OCI-LY7 (cell line): ENCODE measurements at regions of chr4 and their contacts with region 1.

Region 1: GRCh38 chr4:40564004-40564403 is 65.7 kb downstream of the RBM47 start:
- DNase-seq: no peak
- H3K4me3 ChIP-seq: no peak overlapping the region
- H3K27ac ChIP-seq: no peak overlapping the region
- H3K4me1 ChIP-seq: peaks cover 56% of the 10 kb centered on the region
- CTCF ChIP-seq: no peak

Region 2: DNA sequence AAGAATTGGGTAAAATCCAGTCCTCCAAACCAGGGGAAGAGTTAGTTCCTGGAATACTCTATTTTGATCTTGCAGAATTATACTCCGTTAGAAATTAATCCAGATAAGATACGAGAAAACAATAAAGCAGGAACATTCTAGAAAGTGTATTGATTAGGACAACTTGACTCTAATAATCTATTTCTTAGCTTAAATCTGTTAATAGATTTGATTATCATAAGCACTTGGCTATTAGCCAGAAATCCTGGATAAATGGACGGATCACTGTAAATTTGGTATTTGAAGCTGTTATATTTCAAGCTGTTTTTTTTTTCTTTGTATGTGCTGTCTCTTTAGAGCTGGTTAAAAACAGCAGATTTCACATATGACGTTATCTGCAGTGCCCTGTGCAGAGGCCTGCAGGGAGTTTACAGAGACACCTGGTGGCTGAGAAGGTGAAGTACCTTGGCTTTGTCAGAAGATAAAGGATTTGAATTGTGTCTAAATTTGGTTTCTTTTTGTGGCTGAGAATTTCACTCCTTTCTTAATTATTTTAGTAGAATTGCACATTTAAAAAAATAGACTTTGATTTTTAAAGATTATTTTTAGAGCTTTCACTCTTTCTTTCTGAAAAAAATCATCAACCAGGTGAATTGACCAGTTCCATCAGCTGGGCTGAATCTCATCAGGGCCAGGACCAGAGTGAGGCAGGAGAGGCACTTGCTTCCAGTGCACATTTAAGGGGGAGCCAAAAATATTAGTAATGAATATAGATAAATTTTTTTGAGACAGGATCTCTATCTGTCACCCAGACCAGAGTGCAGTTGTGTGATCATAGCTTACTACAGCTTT is 238.6 kb before region 1 on chr4:
- CTCF ChIA-PET with region 1: no interaction called
- POLR2A ChIA-PET with region 1: no interaction called
- intact Hi-C with region 1: no loop called
- DNase-seq: peak; percentile 85
- H3K4me3 ChIP-seq: no peak overlapping the region
- H3K27ac ChIP-seq: no peak overlapping the region
- H3K4me1 ChIP-seq: peaks cover 4% of the 10 kb centered on the region
- CTCF ChIP-seq: peak; percentile 99

Region 3: GRCh38 chr4:40576631-40577480 is 12.9 kb after region 1 on chr4:
- CTCF ChIA-PET with region 1: interaction called, 5 read pairs
- POLR2A ChIA-PET with region 1: interaction called, 32 read pairs
- intact Hi-C with region 1: no loop called
- DNase-seq: peak; percentile 56
- H3K4me3 ChIP-seq: no peak overlapping the region
- H3K27ac ChIP-seq: peak overlapping the region; percentile 25
- H3K4me1 ChIP-seq: peaks cover 47% of the 10 kb centered on the region
- CTCF ChIP-seq: no peak

Region 4: GRCh38 chr4:40621592-40622512 is 57.8 kb after region 1 on chr4:
- CTCF ChIA-PET with region 1: no interaction called
- POLR2A ChIA-PET with region 1: interaction called, 10 read pairs
- intact Hi-C with region 1: loop called (anchors 5 kb)
- DNase-seq: peak; percentile 65
- H3K4me3 ChIP-seq: no peak overlapping the region
- H3K27ac ChIP-seq: no peak overlapping the region
- H3K4me1 ChIP-seq: peaks cover 19% of the 10 kb centered on the region
- CTCF ChIP-seq: no peak